Colonic mucosa (tissue), 4 donors: ENCODE measurements at regions of chr12 and their contacts with region 1.

Region 1: DNA sequence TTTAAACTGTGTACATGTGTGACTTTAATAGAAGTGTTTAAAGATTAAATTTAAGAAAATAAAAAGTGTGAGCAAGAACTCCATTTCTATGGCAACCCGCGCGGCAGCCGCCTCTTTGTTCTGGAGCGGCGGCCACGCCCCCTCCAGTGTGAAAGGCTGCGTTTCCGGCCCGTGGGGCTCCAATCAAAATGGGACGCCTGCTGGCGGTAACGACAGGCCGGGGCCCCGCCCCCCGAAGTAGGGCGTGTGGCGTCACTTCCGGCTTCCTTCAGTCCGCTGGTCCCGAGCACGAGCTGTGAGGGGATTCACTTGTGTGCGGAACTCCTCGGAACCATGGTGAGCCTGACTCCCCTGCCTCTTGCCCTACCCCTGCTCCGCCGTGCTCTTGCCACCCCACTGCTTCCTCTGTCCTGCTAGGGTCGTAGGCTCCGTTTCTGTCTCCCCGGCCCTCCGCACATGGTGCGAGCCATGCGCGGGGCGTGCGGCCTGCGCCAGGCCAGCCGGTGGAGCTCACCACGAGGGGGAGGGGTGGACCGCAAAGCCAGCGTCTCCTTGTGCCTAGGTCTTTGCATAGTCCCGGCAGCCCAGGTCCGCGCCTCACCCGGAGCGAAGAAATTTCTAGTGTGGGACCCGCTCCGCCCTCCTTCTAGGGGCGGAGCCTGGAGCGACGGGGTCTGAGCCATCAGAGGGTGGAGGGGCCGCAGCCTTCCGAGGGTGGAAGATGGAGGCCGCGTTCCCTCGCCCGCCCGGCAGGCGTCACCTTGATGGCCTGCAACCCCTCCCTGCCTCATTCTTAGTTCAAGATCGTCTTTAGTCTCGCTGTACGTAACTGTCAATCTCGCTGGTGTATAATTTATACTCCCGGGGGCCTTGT is at the start of gene CCT2:
- DNase-seq: peak; percentile 98
- H3K4me3 ChIP-seq: peak within 1 kb of the TSS; percentile 89
- H3K27ac ChIP-seq: peak within 1 kb of the TSS; percentile 89
- H3K4me1 ChIP-seq: peaks cover 6% of the 10 kb centered on the region
- H3K27me3 ChIP-seq: no peaks in the 10 kb centered on the region
- CTCF ChIP-seq: peak; percentile 16
- total RNA-seq, gene CCT2: 104 to 223 TPM

Region 2: DNA sequence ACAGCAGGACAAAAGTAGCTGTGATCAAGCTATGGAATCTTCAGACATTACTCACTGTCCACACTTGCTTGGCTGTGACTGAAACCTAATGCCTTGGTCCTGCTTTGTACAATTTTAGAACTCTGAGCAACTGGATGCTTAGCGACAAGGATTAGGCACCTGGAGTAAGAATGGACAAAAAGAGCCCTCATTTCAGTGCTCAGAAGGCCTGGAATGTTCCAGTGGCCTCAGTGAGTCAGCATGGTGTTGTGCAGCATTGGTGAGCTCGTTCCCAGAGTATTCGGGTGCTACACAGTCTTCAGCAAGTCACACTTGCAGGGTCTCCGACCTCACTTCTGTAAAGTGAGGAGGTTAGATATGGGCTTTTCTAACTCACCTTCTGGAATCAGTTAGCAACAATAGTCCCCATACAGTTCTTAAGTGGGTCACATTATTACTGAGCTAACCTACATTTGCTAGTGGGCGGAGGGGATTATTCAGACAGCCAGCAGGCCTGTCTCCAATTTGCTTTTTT is 1145.3 kb before region 1 on chr12:
- intact Hi-C with region 1: no loop called
- DNase-seq: no peak
- H3K4me3 ChIP-seq: no peak overlapping the region
- H3K27ac ChIP-seq: no peak overlapping the region
- H3K4me1 ChIP-seq: no peaks in the 10 kb centered on the region
- H3K27me3 ChIP-seq: no peaks in the 10 kb centered on the region
- CTCF ChIP-seq: no peak

Region 3: GRCh38 chr12:69359531-69360347 is 225.7 kb before region 1 on chr12 and contains the start of gene YEATS4:
- intact Hi-C with region 1: loop called (anchors 10 kb)
- DNase-seq: peak; percentile 94
- H3K4me3 ChIP-seq: peak within 1 kb of the TSS; percentile 94
- H3K27ac ChIP-seq: peak within 1 kb of the TSS; percentile 100
- H3K4me1 ChIP-seq: peaks cover 4% of the 10 kb centered on the region
- H3K27me3 ChIP-seq: no peaks in the 10 kb centered on the region
- CTCF ChIP-seq: no peak
- total RNA-seq, gene YEATS4: 16.4 to 18.2 TPM